Activated CD8-positive, alpha-beta T cell treated with anti-CD3 and anti-CD28 coated beads for 36 hours (primary cell): ENCODE measurements at regions of chr13 and their contacts with region 1.

Region 1: DNA sequence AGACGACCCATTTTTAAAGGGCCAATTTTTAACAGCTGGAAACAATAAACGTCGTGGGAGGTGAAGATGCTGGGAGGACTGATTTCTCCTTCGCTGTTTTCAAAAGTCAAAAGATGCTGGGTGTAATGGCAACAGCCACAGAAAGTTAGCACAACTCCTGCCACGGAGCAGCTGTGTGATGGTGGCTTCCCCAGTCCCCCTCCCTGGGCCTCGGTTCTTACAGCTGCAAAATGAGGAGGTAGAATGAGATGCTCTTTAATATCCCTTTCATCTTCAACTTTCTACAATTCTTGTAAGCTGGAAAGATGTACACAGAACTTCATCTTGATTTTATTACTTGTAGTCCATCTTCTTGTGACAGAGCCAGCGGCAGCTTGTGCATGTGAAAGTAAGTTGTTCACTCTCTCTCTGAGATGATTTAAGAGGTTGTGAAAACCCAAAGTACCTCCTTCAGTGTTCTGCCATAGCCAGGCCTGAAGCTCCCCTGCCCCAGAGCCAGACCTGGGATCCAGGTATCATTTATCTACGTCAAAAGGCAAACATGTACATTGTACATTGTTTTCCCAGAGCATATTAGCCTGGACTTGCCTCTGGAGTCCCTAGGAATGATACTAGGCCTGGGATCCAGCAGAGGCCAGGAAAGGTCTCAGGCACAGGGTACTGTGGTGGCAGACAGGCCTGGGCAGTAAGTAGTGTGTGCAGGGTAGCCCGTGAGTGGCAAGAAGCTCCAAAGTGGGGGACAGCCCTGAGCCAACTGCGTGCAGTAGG is 3.4 kb upstream of the UBE2L5 start:
- DNase-seq: no peak
- ATAC-seq: no peak
- H3K4me3 Mint-ChIP-seq: no peak overlapping the region
- H3K27ac Mint-ChIP-seq: no peak overlapping the region
- H3K4me1 Mint-ChIP-seq: peaks cover 24% of the 10 kb centered on the region
- H3K27me3 Mint-ChIP-seq: peaks cover 2% of the 10 kb centered on the region
- CTCF ChIP-seq: no peak

Region 2: GRCh38 chr13:30429721-30430694 is 11.1 kb after region 1 on chr13:
- CTCF ChIA-PET with region 1: no interaction called
- POLR2A ChIA-PET with region 1: interaction called, 10 read pairs
- intact Hi-C with region 1: no loop called
- DNase-seq: peak; percentile 60
- ATAC-seq: peak; percentile 96
- H3K4me3 Mint-ChIP-seq: peak overlapping the region; percentile 45
- H3K27ac Mint-ChIP-seq: peak overlapping the region; percentile 85
- H3K4me1 Mint-ChIP-seq: peaks cover 29% of the 10 kb centered on the region
- H3K27me3 Mint-ChIP-seq: no peaks in the 10 kb centered on the region
- CTCF ChIP-seq: no peak